ENCODE measurements at regions of chr14 and their contacts with region 1.

Region 1: GRCh38 chr14:68734231-68734775 is 58.6 kb downstream of the ZFP36L1 start:
- DNase-seq: no peak
- H3K4me3 ChIP-seq: no peak overlapping the region
- H3K27ac ChIP-seq: no peak overlapping the region
- H3K4me1 ChIP-seq: peaks cover 36% of the 10 kb centered on the region
- H3K27me3 ChIP-seq: no peaks in the 10 kb centered on the region
- CTCF ChIP-seq: no peak
- POLR2A ChIP-seq: no peak

Region 2: DNA sequence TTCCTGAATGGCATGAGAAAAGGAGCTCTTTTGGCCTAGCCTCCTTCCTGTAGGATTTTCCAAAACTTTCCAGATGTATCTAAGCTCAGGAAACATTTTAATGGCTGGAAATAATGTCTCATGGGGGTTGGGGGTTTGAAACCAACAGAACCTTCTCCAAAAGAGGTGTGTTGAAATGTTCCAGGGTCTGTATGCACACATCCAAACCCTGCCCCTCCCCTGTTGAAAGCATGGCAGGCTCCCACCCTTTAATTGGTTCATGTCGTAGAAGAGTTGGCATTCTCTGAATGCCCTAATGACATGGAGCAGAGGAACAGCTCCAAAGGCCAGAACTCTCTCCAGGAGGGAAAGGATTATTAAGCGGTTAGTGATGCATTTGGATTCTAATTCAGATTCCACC is 294.6 kb before region 1 on chr14:
- intact Hi-C with region 1: no loop called
- DNase-seq: no peak
- H3K4me3 ChIP-seq: no peak overlapping the region
- H3K27ac ChIP-seq: peak overlapping the region; percentile 3
- H3K4me1 ChIP-seq: peaks cover 21% of the 10 kb centered on the region
- H3K27me3 ChIP-seq: no peaks in the 10 kb centered on the region
- CTCF ChIP-seq: no peak
- POLR2A ChIP-seq: no peak

Region 3: DNA sequence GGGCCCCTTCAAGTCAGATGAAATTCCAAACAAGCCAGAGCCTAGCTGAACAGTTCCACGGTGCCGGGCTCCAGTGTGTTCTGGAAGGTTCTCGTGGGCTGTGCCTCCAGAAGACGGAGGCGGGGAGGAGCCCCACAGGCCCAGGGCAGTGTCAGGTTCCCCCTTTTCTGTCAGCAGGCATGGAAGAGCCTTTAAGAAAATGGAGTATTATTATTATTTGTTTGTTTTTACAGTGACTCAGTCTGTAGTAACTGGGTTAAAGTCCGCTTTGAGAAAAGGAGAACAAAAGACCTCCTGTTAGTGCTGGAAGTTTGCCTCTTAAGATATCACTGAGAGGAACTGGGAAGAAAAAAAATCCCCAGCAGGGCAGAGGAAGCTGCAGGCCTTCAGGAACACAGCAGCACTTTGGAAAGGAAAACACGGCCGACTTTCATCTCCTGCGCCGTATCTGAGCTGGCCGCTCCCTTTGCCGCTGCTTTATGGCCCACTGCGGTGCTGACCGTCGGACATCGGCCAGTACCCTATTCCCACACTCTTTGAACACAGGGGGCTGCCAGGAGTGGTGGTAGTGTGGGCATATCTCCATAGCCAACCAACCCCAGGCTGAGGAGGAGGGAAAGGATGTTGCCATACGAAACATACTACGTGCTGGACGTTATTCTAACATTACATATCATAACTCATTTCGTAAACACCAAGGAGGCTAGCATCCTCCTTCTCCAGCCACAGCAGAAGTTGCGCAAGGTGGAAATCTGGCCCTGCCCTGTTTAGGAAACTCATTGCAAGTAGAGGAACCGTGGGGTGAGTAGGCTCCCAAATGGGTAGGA is 135.5 kb before region 1 on chr14:
- intact Hi-C with region 1: no loop called
- DNase-seq: no peak
- H3K4me3 ChIP-seq: no peak overlapping the region
- H3K27ac ChIP-seq: peak overlapping the region; percentile 91
- H3K4me1 ChIP-seq: peaks cover 51% of the 10 kb centered on the region
- H3K27me3 ChIP-seq: no peaks in the 10 kb centered on the region
- CTCF ChIP-seq: no peak
- POLR2A ChIP-seq: no peak

Region 4: DNA sequence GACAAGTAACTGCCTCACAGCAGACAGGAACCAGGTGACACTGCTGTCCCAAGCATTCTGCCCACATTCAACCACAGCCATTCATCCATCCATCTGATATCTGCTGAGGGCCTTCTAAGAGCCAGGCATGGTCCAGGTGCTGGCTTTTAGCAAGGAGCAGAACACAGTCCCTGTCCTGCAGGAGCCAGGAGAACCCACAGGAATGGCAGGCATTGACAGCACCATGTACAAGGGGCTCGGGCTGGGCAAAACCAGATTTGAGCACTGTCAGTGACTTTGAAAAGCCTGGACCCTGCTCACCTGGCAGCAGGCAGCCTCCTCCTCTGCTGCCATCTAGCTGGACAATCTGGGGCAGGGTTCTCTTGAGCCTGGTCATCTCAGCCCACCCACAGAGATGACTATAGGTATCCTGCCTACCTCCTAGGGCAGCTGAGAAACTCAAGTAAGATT is 78.4 kb before region 1 on chr14:
- intact Hi-C with region 1: no loop called
- DNase-seq: peak; percentile 46 to 83
- H3K4me3 ChIP-seq: no peak overlapping the region
- H3K27ac ChIP-seq: peak overlapping the region; percentile 82
- H3K4me1 ChIP-seq: peaks cover 54% of the 10 kb centered on the region
- H3K27me3 ChIP-seq: no peaks in the 10 kb centered on the region
- CTCF ChIP-seq: no peak
- POLR2A ChIP-seq: no peak

Region 5: GRCh38 chr14:68748691-68749090 is 14.4 kb after region 1 on chr14:
- intact Hi-C with region 1: loop called (anchors 1 kb)
- DNase-seq: no peak
- H3K4me3 ChIP-seq: no peak overlapping the region
- H3K27ac ChIP-seq: no peak overlapping the region
- H3K4me1 ChIP-seq: peaks cover 13% of the 10 kb centered on the region
- H3K27me3 ChIP-seq: no peaks in the 10 kb centered on the region
- CTCF ChIP-seq: no peak
- POLR2A ChIP-seq: no peak